G401 (cell line): ENCODE measurements at regions of chr22 and their contacts with region 1.

Region 1: GRCh38 chr22:43431808-43432554 is 20.2 kb downstream of the MPPED1 start:
- DNase-seq: no peak

Region 2: DNA sequence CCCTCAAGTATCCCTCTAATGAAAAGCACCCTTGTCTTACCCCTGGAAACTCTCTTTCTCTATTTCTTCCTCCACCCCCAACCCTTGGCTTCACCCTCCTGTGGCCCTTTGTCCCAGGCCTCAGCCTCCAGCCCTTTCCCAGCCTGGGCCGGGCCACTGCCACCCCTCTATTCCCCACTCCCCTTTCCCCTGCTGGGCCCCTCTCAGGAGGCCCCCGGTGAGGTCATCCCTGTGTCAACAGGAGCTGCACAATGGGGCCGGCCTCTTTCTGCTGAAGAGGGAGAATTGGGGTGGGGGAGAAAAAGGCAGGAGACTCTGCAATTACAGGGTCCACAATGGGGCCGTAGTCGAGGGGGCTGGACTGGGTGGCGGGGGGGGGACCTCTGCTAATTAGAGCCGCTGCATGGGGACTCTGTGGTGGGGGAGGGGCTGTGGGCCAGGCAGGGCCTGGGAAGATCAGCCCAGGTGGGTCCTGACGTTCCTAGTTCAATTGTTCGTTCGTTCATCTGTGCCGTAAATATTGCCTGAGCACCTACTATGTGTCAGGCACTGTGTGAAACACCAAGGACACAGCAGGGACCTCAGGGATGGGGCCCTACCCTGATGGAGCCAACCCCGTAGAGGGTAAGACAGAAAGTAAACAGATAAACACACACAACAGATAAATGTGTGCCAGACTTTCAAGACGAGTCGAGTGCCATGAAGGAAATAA is 38.7 kb before region 1 on chr22:
- in situ Hi-C with region 1: loop called (anchors 5 kb)
- DNase-seq: no peak

Region 3: GRCh38 chr22:43707648-43708047 is 275.7 kb after region 1 on chr22:
- in situ Hi-C with region 1: no loop called
- DNase-seq: no peak